Uterus (tissue), 4 donors: ENCODE measurements at regions of chr11 and their contacts with region 1.

Region 1: DNA sequence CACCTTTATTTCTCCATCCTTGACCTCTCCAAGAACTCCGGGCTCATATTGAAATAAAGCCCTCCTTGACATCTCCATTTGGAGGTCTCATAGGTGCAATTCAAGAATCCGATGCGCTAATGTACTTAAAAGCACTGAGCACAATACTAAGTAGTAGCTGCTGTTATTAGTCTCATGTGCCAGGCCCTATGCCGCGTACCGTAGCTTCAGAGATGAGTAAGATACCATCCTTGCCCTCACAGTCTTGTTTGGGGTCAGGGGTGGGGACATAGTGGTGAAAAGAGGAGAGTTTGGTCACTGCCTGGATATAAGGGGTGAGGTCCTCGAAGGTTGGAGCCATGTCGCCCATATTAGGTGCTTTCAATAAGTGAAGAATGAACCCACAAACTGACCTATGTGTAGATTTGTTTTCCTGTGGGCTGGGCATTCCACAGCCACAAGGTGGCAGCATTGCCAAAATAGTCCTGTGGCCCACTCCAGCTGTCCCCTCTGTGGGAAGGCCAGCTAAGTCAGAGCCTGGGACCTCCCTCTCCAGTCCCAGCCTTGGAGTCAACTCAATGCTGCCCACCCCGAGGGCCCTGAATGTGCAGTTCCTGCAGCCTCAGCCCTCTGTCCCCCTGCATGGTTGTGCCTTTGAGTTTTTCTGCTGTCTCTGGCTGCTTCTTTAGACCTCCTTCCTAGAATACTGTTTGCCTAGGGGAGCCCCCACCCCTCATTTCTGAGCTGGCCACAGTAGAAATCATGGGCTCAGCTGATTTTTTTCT is 6.5 kb downstream of the DCPS start:
- DNase-seq: peak; percentile 74 to 81
- H3K4me3 ChIP-seq: no peak overlapping the region
- H3K27ac ChIP-seq: no peak overlapping the region
- H3K4me1 ChIP-seq: no peaks in the 10 kb centered on the region
- H3K27me3 ChIP-seq: no peaks in the 10 kb centered on the region
- CTCF ChIP-seq: peak; percentile 84 to 88 (median 87)
- POLR2A ChIP-seq: no peak

Region 2: DNA sequence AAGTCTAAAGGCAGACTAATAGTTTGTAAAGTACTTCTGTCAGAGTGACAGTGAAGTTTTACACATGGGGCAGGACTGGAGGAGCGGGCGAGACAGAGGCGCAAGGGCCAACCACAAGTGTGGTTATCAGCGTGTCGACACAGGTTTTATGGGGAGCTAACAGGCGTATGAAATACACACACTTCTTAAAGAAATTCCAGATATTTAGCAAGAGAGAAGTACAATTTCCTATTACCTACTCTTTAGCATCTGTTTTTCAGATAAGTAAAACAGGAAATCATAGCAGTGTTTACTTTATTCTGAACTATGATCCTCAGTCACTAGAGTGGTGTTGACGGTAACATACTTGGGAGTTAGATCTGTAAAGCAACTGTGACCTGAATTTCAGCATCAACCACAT is 342.1 kb before region 1 on chr11:
- intact Hi-C with region 1: no loop called
- DNase-seq: no peak
- H3K4me3 ChIP-seq: no peak overlapping the region
- H3K27ac ChIP-seq: no peak overlapping the region
- H3K4me1 ChIP-seq: no peaks in the 10 kb centered on the region
- H3K27me3 ChIP-seq: no peaks in the 10 kb centered on the region
- CTCF ChIP-seq: no peak
- POLR2A ChIP-seq: no peak

Region 3: GRCh38 chr11:126416542-126417090 is 106.2 kb after region 1 on chr11:
- intact Hi-C with region 1: loop called (anchors 10 kb)
- DNase-seq: peak; percentile 91 to 93
- H3K4me3 ChIP-seq: peak overlapping the region; percentile 37
- H3K27ac ChIP-seq: peak overlapping the region; percentile 79 to 83
- H3K4me1 ChIP-seq: peaks cover 15 to 17% of the 10 kb centered on the region in 2 donors
- H3K27me3 ChIP-seq: no peaks in the 10 kb centered on the region
- CTCF ChIP-seq: peak in 1 of 4 experiments; percentile 30
- POLR2A ChIP-seq: peak in 1 of 2 donors; percentile 54

Region 4: DNA sequence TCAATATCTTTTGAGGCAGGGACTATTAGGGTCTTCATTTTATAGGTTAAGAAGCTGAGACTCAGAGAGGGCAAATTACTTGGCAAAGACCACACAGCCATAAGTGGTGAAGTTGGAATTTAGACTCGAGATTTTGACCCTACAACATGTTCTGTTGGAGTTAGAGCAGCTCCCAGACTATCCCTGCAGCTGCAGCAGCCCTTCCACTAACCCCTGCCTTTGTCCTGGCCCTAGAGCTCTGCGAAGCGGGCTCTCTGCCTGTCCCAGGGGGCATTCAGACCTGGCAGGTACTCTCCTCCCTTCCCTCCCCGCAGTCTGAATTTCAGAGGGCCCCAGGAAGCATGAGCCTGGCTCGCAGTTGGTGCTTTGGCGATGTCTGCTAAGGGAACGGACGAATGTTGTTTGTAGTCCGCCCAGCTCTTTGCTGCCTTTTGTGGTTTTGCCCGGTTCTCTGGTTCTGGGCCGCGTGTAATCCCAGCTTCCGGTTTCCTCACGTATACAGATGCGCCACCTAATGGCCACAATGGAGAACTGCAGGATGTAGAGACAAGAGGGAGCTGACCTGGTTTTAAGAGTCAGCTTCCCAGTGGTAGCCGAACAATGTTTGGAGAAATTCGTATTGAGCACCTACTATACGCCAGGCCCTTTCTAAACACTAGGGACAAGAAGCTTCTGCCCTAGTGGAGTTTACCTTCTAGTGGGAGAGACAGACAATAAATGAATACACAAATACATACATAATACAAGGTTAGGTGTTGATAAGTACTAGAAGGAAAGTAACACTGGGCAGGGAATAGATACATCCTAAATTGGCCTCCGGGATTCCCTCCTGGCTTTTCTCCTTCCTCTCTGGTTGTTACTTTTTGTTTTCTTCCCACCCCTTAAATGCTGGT is 170.2 kb after region 1 on chr11:
- intact Hi-C with region 1: loop called (anchors 1 kb)
- DNase-seq: peak; percentile 79 to 88
- H3K4me3 ChIP-seq: no peak overlapping the region
- H3K27ac ChIP-seq: peak overlapping the region; percentile 68 to 69
- H3K4me1 ChIP-seq: no peaks in the 10 kb centered on the region
- H3K27me3 ChIP-seq: no peaks in the 10 kb centered on the region
- CTCF ChIP-seq: peak; percentile 94 to 95 (median 94)
- POLR2A ChIP-seq: no peak

Region 5: GRCh38 chr11:126491092-126491491 is 180.7 kb after region 1 on chr11:
- intact Hi-C with region 1: no loop called
- DNase-seq: no peak
- H3K4me3 ChIP-seq: no peak overlapping the region
- H3K27ac ChIP-seq: no peak overlapping the region
- H3K4me1 ChIP-seq: no peaks in the 10 kb centered on the region
- H3K27me3 ChIP-seq: no peaks in the 10 kb centered on the region
- CTCF ChIP-seq: no peak
- POLR2A ChIP-seq: no peak